ENCODE measurements at regions of chr4 and their contacts with region 1.

Region 1: DNA sequence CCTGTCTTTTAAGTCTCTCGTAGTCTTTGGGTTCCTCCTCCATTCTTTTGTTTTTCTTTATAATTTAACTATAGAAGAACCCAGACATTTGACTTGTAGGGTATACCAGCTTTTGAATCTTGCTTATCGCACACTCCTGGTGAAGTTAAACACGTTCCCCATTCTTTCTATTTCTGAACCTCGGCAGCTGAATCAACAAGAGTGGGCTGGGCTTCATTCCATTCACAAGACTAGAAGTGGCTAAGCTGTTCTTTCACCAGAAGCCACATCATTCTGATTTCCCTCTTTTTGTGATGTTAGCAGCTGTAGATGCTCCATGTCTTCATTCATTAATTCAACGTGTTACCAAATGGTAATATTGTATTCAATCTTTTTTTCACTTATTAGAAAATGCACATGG is 167.9 kb downstream of the CORIN start:
- DNase-seq: no peak
- H3K4me3 ChIP-seq: no peak overlapping the region
- CTCF ChIP-seq: no peak

Region 2: GRCh38 chr4:47733302-47734175 is 63.6 kb after region 1 on chr4:
- in situ Hi-C with region 1: no loop called
- DNase-seq: no peak
- H3K4me3 ChIP-seq: no peak overlapping the region
- CTCF ChIP-seq: no peak

Region 3: DNA sequence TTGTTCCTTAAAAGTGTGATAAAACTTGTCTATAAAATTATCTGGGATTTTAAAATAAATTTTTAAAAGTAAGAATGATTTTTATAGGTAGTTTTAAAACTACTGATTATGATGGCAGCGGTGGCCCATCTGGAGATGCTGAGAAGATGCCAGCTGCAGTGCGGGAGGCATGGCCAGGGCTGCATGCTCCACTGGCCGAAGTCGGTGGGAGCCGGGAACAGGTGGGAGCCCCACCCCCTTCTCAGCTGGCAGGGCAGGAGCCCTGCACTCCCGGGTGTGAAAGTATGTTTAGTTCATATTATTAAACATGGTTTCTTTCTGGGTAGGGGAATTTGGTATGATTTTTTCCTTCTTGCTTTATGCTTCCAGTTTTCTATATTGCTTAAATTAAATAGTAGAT is 104.1 kb after region 1 on chr4:
- in situ Hi-C with region 1: no loop called
- DNase-seq: no peak
- H3K4me3 ChIP-seq: no peak overlapping the region
- CTCF ChIP-seq: no peak

Region 4: GRCh38 chr4:47933840-47934239 is 263.9 kb after region 1 on chr4:
- in situ Hi-C with region 1: loop called (anchors 10 kb)
- DNase-seq: no peak
- H3K4me3 ChIP-seq: no peak overlapping the region
- CTCF ChIP-seq: peak; percentile 40

Measured in astrocyte of the cerebellum (primary cell).